HepG2 (cell line): ENCODE measurements at regions of chr14 and their contacts with region 1.

Region 1: DNA sequence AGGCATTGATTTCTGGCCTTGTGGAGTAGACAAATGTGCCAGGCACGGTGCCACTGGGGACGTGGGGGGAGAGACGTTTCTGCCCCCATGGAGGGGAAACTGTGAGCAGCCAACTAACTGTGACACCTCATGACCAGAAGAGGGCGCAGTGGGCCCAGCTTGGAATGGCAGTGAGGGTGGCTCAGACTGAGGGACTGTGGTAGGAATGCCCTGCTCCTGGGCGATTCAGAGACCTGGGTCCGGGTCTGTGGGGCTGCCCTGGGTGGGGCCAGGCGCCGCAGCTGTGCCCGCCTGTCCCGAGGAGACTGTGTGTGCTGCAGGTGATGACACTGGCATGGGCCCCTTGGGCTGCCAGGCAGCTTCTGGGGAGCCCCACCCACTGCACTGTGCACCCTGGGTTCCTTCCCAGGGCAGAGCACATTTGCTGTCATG is 60.6 kb downstream of the SLC25A47 start:
- DNase-seq: peak; percentile 58
- ATAC-seq: peak; percentile 96
- H3K4me3 ChIP-seq: peak overlapping the region in 1 of 3 experiments; percentile 25; a peak in 1 of 6 replicates
- H3K27ac ChIP-seq: no peak overlapping the region
- H3K4me1 ChIP-seq: peaks cover 8% of the 10 kb centered on the region
- H3K27me3 ChIP-seq: no peaks in the 10 kb centered on the region
- CTCF ChIP-seq: peak; percentile 95
- EP300 ChIP-seq: no peak
- POLR2A ChIP-seq: no peak
- RAD21 ChIP-seq: peak; percentile 83

Region 2: GRCh38 chr14:100417466-100417865 is 33.7 kb after region 1 on chr14:
- CTCF ChIA-PET with region 1: interaction called, 8 read pairs
- POLR2A ChIA-PET with region 1: no interaction called
- in situ Hi-C with region 1: loop called (anchors 5 kb)
- intact Hi-C with region 1: loop called (anchors 1 kb)
- DNase-seq: peak; percentile 55
- ATAC-seq: peak; percentile 98
- H3K4me3 ChIP-seq: no peak overlapping the region
- H3K27ac ChIP-seq: no peak overlapping the region
- H3K4me1 ChIP-seq: no peaks in the 10 kb centered on the region
- H3K27me3 ChIP-seq: no peaks in the 10 kb centered on the region
- CTCF ChIP-seq: peak; percentile 83
- EP300 ChIP-seq: no peak
- POLR2A ChIP-seq: no peak
- RAD21 ChIP-seq: peak; percentile 78

Region 3: GRCh38 chr14:100424504-100425418 is 41.0 kb after region 1 on chr14:
- CTCF ChIA-PET with region 1: interaction called, 8 read pairs
- POLR2A ChIA-PET with region 1: no interaction called
- in situ Hi-C with region 1: loop called (anchors 5 kb)
- intact Hi-C with region 1: loop called (anchors 1 kb)
- DNase-seq: no peak
- ATAC-seq: no peak
- H3K4me3 ChIP-seq: no peak overlapping the region
- H3K27ac ChIP-seq: no peak overlapping the region
- H3K4me1 ChIP-seq: peaks cover 14% of the 10 kb centered on the region
- H3K27me3 ChIP-seq: no peaks in the 10 kb centered on the region
- CTCF ChIP-seq: no peak
- EP300 ChIP-seq: no peak
- POLR2A ChIP-seq: no peak
- RAD21 ChIP-seq: no peak

Region 4: GRCh38 chr14:100654814-100655740 is 271.3 kb after region 1 on chr14:
- CTCF ChIA-PET with region 1: interaction called, 3 read pairs
- POLR2A ChIA-PET with region 1: no interaction called
- in situ Hi-C with region 1: loop called (anchors 5 kb)
- intact Hi-C with region 1: loop called (anchors 2 kb)
- DNase-seq: no peak
- ATAC-seq: peak; percentile 75
- H3K4me3 ChIP-seq: peak overlapping the region; percentile 32 to 71 (median 38); a peak in 4 of 6 replicates
- H3K27ac ChIP-seq: no peak overlapping the region
- H3K4me1 ChIP-seq: peaks cover 60% of the 10 kb centered on the region
- H3K27me3 ChIP-seq: peaks cover 0 to 47% of the 10 kb centered on the region in 2 experiments; a peak in 4 of 5 replicates
- CTCF ChIP-seq: peak; percentile 89
- EP300 ChIP-seq: no peak
- POLR2A ChIP-seq: no peak
- RAD21 ChIP-seq: peak; percentile 85

Region 5: GRCh38 chr14:101665515-101666078 is 1281.9 kb after region 1 on chr14:
- CTCF ChIA-PET with region 1: no interaction called
- POLR2A ChIA-PET with region 1: no interaction called
- in situ Hi-C with region 1: no loop called
- intact Hi-C with region 1: loop called (anchors 5 kb)
- DNase-seq: peak; percentile 32
- ATAC-seq: peak; percentile 56
- H3K4me3 ChIP-seq: no peak overlapping the region
- H3K27ac ChIP-seq: no peak overlapping the region
- H3K4me1 ChIP-seq: no peaks in the 10 kb centered on the region
- H3K27me3 ChIP-seq: peaks cover 0 to 6% of the 10 kb centered on the region in 2 experiments; a peak in 1 of 5 replicates
- CTCF ChIP-seq: peak; percentile 67
- EP300 ChIP-seq: no peak
- POLR2A ChIP-seq: no peak
- RAD21 ChIP-seq: peak; percentile 33; the same call in 1 of the 2 replicates